Activated CD8-positive, alpha-beta memory T cell treated with anti-CD3 and anti-CD28 coated beads, Interleukin-2, amount 10 ng/mL, durations not matched to agents 7 days and 5 days (primary cell): ENCODE measurements at regions of chr5 and their contacts with region 1.

Region 1: DNA sequence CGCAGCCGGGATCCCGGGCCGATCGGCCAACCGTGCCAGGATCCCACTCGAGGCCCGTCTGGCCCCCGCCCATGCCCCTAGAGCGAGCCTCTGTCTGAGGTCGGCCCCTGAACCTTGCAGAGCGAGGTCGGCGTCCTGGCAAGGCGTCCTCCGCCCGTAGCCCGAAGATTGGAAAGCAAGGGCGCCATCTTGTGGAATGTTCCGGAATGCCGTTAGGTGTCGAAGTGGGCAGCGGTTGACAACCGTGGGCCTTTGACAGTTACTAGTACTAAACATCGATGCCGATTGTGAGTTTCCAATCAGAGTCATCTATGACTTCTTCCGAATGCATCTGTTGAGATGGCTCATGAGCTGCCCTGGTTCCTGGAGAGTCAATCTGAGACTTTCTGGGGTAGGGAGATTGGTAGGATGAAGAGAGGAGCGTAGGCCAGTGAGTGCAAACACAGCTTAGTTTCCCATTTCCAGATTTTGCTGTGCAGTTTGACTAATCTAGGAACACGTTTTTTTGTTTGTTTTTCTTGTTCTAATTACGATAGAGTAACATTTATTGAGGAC is 923 bp upstream of the PLK2 start:
- DNase-seq: peak; percentile 91
- ATAC-seq: peak; percentile 76
- H3K4me3 Mint-ChIP-seq: peak overlapping the region; percentile 70
- H3K27ac Mint-ChIP-seq: peak overlapping the region; percentile 52
- H3K4me1 Mint-ChIP-seq: peaks cover 19% of the 10 kb centered on the region
- H3K27me3 Mint-ChIP-seq: peaks cover 34% of the 10 kb centered on the region

Region 2: DNA sequence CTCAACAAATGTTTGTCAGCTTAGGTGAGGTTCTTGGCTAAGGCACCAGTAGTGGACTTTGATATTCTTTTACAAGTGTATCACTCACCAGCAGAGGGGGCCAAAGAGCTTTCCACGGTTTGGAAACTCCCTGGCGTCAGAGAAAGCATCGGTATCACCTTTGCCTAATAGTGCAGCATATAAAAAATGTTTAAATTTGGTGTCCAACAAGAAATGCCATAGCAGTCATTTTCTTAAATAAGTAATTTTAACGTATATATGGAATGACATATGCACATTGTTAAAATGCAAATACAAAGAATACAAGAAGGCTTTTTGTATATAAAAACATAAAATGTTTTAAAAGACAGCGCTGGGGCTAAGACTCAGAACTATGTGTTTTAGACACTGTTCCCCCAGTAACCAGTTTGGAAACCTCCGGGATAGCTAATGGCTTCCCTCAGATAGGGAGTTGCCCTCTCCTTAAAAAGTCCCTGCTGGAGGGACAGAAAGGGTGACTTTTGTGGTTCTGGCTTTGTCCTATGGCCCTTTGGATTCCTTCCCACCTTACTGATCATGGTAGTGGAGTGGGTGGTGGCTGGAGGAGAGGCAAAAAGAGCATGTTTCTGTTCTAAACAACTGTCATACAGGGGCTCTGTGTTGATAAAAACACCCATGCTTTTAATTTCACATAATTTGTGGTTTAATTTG is 1162.4 kb before region 1 on chr5:
- CTCF ChIA-PET with region 1: interaction called, 34 read pairs
- DNase-seq: peak; percentile 86
- ATAC-seq: peak; percentile 78
- H3K4me3 Mint-ChIP-seq: peak overlapping the region; percentile 42
- H3K27ac Mint-ChIP-seq: peak overlapping the region; percentile 55
- H3K4me1 Mint-ChIP-seq: peaks cover 10% of the 10 kb centered on the region
- H3K27me3 Mint-ChIP-seq: no peaks in the 10 kb centered on the region

Region 3: DNA sequence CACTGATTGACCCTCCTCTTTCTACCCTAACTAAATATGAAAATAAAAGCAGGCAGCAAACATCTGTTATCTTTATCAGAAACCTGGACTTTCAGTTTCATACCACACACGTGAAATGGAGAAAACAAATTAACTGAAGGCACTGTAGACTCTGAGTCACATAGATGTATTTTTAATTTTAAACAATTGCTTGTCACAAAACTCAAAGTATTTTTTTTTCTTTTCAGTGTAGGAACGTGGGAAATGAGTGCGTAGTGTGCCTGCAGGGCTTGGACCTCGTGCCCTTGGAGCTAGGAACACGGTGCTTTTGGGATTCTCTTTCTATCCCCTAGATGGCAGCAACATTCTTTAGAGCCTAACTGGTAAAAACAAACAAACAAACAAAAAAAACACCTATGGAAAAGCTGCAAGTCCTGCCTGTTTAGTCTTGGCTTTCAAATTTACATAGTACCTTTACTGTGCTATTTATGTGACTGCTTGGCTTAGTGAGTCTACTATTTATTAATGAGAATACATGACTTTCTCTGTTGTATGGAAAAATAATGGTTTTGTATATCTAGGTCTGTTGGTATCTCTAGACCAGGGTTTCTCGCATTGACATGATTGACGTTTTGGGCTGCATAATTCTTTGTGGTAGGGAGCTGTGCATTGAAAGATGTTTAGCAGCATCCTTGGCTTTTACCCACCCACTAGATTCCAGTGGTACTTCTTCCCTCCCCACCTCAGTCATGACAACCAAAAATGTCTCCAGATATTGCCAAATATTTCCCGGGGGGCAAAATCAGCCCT is 961.4 kb before region 1 on chr5:
- CTCF ChIA-PET with region 1: interaction called, 22 read pairs
- DNase-seq: no peak
- ATAC-seq: peak; percentile 72
- H3K4me3 Mint-ChIP-seq: peak overlapping the region; percentile 56
- H3K27ac Mint-ChIP-seq: peak overlapping the region; percentile 13
- H3K4me1 Mint-ChIP-seq: peaks cover 25% of the 10 kb centered on the region
- H3K27me3 Mint-ChIP-seq: peaks cover 31% of the 10 kb centered on the region

Region 4: GRCh38 chr5:57650360-57651069 is 810.3 kb before region 1 on chr5:
- CTCF ChIA-PET with region 1: interaction called, 19 read pairs
- DNase-seq: no peak
- ATAC-seq: no peak
- H3K4me3 Mint-ChIP-seq: no peak overlapping the region
- H3K27ac Mint-ChIP-seq: no peak overlapping the region
- H3K4me1 Mint-ChIP-seq: no peaks in the 10 kb centered on the region
- H3K27me3 Mint-ChIP-seq: peaks cover 6% of the 10 kb centered on the region

Region 5: DNA sequence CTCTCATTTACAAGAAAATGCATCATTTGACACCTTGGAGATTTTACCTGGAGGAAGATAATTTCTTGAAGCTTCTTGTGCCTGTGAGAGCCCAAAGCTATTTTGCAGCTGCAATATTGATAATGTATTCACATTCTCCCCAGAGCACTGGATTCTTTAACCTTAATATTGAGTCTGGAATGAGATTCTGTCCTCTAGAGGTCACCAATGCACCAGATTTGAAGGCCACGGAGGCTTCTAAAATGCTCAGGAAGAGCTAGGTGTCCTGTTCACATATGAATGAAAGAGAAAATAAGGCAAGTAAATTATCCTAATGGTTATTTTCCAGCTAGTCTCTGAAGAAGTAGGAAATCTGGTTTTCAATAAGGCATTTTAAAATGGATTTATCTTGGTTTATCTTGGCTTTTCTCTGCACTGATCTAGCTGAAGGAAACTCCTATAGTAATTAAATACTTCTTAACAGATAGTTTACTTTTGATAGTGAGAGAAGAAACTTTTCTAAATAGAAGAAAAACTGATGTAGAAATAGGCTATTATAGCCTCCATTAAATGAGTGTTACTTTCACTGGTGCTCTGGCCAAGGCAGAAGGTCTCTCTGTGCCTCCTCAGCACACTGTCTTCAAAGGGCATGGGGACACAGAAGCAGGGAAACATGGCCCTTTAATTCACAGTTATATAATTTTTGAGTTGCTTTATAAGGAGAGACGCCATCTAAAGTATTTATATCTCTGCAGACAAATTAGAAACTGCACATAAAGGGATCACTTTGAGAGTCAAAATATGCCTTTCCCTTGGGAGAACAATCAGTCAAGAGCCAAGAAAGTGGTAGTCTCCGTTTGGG is 681.2 kb before region 1 on chr5:
- CTCF ChIA-PET with region 1: interaction called, 16 read pairs
- DNase-seq: no peak
- ATAC-seq: no peak
- H3K4me3 Mint-ChIP-seq: no peak overlapping the region
- H3K27ac Mint-ChIP-seq: no peak overlapping the region
- H3K4me1 Mint-ChIP-seq: no peaks in the 10 kb centered on the region
- H3K27me3 Mint-ChIP-seq: peaks cover 9% of the 10 kb centered on the region

Region 6: DNA sequence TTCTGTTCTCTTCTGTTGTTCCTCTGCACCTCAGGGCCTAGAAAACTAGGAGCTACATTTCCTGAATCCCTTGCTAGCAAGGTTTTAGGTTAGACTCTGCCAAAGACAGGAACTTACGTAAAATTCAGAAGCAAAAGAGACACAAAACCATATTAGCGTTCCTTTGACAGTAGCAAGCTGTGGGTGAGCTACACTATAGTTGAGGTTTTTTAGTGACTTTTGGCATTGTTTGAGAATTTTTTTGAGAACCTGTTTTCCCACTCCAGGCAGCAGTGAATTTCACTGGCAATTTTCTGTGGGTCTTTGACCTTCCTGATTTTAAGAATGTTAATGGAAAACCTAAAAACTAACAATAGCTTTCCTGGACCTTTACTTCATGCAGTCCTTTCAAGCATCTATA is 36.6 kb before region 1 on chr5:
- CTCF ChIA-PET with region 1: no interaction called
- DNase-seq: no peak
- ATAC-seq: no peak
- H3K4me3 Mint-ChIP-seq: no peak overlapping the region
- H3K27ac Mint-ChIP-seq: no peak overlapping the region
- H3K4me1 Mint-ChIP-seq: no peaks in the 10 kb centered on the region
- H3K27me3 Mint-ChIP-seq: no peaks in the 10 kb centered on the region

Region 7: DNA sequence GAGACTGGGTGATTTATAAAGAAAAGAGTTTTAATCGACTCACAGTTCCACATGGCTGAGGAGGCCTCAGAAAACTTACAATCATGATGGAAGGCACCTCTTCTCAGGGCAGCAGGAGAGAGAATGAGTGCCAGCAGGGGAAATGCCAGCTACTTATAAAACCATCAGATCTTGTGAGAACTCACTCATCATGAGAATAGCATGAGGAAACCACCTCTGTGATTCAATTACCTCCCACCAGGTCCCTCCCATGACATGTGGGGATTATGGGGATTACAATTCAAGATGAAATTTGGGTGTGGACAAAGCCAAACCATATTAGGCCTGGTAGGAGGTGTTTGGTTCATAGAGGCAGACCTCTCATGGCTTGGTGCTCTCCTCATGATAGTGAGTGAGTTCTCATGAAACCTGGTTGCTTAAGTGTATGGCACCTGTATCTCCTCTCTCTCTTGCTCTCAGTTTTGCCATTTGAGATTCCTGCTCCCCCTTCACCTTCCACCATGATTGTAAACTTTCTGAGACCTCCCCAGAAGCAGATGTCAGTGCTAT is 70.2 kb after region 1 on chr5:
- CTCF ChIA-PET with region 1: no interaction called
- DNase-seq: no peak
- ATAC-seq: no peak
- H3K4me3 Mint-ChIP-seq: no peak overlapping the region
- H3K27ac Mint-ChIP-seq: no peak overlapping the region
- H3K4me1 Mint-ChIP-seq: no peaks in the 10 kb centered on the region
- H3K27me3 Mint-ChIP-seq: peaks cover 3% of the 10 kb centered on the region